GM12878 (cell line): ENCODE measurements at regions of chr17 and their contacts with region 1.

Region 1: DNA sequence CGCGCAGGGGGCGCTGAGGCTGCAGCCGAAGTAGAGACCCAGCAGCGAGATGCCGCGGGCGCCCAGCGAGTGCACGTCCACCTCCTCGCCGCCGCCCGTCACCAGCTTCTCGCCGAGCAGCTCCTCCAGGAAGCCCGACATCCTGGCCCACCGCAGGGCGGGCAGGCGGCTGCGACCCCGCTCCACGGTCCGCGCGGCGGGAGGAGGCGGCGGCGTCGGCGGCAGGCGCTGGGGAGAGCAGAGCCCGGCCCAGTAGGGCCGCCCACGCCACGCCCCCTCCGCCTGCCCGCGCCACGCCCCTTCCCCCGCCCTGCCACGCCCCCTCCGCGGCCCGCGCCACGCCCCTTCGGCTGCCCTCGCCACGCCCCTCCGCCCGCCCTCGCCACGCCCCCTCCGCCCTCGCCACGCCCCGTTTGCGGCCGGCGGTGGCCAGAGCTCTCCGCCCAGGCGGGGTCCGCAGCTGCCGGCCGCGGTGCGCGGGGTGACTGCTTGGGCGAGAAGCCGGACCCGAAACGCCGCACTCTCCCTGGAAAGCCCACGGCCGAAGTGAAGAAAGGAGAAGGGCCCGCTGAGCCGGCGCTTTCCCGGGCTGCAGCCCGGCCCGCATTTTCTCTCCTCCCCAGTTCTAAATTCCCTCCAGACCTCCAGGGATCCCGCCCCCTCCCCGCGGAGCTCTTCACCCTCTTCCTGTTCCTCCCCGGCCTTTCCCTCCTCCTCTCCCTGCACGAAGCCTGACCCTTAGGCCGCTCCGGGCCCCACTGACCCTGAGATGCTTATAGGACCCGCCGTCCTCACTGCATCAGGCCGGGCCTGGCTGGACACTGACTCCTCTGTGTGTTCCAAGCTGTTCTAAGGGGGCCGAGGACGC is at the start of gene NXN:
- DNase-seq: no peak
- ATAC-seq: peak; percentile 91
- H3K4me3 ChIP-seq: peak within 1 kb of the TSS; percentile 61
- H3K27ac ChIP-seq: no peak within 1 kb of the TSS
- H3K4me1 ChIP-seq: peaks cover 7% of the 10 kb centered on the region; the same call in 1 of the 2 replicates
- H3K27me3 ChIP-seq: peaks cover 3 to 11% of the 10 kb centered on the region in 2 experiments; a peak in 2 of 4 replicates
- CTCF ChIP-seq: no peak; a peak in 1 of 6 replicates
- EP300 ChIP-seq: no peak
- POLR2A ChIP-seq: no peak
- RAD21 ChIP-seq: no peak
- polyA plus RNA-seq, gene NXN: 0.04 to 0.10 TPM

Region 2: DNA sequence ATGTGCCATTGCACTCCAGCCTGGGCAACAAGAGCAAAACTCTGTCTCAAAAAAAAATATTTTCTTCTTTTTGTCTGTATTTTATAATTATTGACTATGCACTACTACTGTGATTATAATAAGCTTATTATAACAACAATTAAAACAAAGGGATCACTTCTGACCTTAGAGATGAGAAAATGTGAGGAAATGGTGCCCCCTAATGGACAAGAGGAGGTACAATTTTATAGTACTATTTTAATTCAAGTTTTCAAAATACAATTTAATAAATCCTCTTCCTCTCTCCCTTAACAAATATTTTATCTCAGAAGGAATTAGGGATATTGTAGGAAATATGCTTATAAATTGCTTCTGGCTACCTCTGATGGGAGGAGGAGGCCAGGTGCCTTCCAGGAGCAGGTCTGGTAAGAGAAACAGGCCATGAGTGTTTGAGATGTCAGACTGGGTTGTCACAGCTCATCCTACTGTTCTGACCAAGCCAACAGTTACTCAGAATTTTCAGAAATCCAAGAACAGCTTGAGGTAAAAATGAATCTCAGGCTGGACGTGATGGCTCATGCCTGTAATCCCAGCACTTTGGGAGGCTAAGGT is 279.2 kb before region 1 on chr17:
- CTCF ChIA-PET with region 1: interaction called, 13 read pairs
- POLR2A ChIA-PET with region 1: no interaction called
- RAD21 ChIA-PET with region 1: interaction called, 7 read pairs
- SMC1A ChIA-PET with region 1: interaction called, 9 read pairs
- in situ Hi-C with region 1: no loop called
- intact Hi-C with region 1: no loop called
- DNase-seq: no peak
- ATAC-seq: peak; percentile 52
- H3K4me3 ChIP-seq: no peak overlapping the region
- H3K27ac ChIP-seq: no peak overlapping the region
- H3K4me1 ChIP-seq: no peaks in the 10 kb centered on the region
- H3K27me3 ChIP-seq: no peaks in the 10 kb centered on the region
- CTCF ChIP-seq: peak; percentile 37 to 64 (median 43); a peak in 5 of 6 replicates
- EP300 ChIP-seq: no peak
- POLR2A ChIP-seq: no peak
- RAD21 ChIP-seq: peak; percentile 67

Region 3: DNA sequence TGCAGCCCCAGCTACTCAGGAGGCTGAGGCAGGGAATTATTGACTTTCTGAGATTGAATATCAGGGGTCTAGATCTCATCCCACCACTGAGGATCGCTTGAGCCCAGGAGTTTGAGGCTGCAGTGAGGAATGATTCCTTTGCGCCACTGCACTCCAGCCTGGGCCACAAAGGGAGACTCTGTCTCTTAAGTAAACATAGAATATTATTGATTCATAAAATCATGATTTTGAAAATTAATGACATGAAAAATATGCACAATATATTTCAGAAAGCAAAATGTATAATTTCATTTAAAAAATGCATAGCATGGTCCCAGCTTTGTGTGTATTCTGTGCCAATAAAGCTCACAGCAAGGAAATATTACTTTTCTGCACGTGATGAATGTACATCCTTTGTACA is 263.5 kb before region 1 on chr17:
- CTCF ChIA-PET with region 1: interaction called, 6 read pairs
- POLR2A ChIA-PET with region 1: no interaction called
- RAD21 ChIA-PET with region 1: interaction called, 8 read pairs
- SMC1A ChIA-PET with region 1: interaction called, 5 read pairs
- in situ Hi-C with region 1: no loop called
- intact Hi-C with region 1: loop called (anchors 10 kb)
- DNase-seq: no peak
- ATAC-seq: no peak
- H3K4me3 ChIP-seq: no peak overlapping the region
- H3K27ac ChIP-seq: no peak overlapping the region
- H3K4me1 ChIP-seq: no peaks in the 10 kb centered on the region; the same call in 1 of the 2 replicates
- H3K27me3 ChIP-seq: no peaks in the 10 kb centered on the region
- CTCF ChIP-seq: no peak
- EP300 ChIP-seq: no peak
- POLR2A ChIP-seq: no peak
- RAD21 ChIP-seq: no peak

Region 4: DNA sequence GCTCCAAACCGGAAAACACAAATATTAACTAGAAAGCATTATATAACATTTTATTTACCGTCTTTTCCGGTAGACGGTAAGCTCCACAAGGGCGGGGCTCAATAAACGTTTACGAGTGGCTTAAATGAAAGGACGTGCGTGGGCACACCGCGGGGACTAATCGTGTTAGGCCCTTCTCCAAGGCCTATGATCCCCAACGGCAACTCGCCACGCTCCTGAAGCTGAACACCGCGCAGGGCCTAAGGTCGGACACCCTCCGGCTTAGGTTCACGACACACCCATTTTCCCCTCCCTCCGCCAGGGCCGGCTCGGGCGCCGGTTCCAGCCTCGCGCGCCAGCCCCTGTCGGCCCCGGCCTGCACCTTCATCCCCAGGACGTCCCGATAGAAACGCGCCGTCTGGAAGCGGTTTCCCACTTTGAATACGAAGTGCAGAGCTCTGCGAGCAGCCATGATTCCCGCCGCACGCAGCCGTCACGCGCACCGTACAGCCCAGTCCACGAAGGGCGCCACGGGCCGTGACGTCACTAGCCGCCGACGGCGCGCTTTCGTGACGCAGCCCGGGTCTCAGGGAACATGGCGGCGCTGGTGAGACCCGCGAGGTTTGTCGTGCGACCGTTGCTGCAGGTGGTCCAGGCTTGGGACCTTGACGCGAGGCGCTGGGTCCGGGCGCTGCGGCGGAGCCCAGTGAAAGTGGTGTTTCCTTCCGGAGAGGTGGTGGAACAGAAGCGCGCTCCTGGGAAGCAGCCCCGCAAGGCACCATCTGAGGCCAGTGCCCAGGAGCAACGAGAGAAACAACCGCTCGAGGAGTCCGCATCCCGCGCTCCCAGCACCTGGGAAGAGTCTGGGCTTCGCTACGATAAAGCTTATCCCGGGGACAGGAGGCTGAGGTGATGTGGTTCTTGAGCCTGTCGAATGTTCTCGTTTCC is 197.7 kb before region 1 on chr17 and contains the starts of genes GLOD4 and MRM3:
- CTCF ChIA-PET with region 1: interaction called, 13 read pairs
- POLR2A ChIA-PET with region 1: interaction called, 3 read pairs
- RAD21 ChIA-PET with region 1: interaction called, 25 read pairs
- SMC1A ChIA-PET with region 1: interaction called, 13 read pairs
- in situ Hi-C with region 1: no loop called
- intact Hi-C with region 1: no loop called
- DNase-seq: peak; percentile 72
- ATAC-seq: peak; percentile 96
- H3K4me3 ChIP-seq: peak within 1 kb of the TSS; percentile 89
- H3K27ac ChIP-seq: peak within 1 kb of the TSS; percentile 72
- H3K4me1 ChIP-seq: peaks cover 10% of the 10 kb centered on the region
- H3K27me3 ChIP-seq: no peaks in the 10 kb centered on the region
- CTCF ChIP-seq: peak in 2 of 3 experiments; percentile 11 to 16; a peak in 1 of 6 replicates
- EP300 ChIP-seq: peak in 1 of 2 experiments; percentile 38; a peak in 1 of 4 replicates
- POLR2A ChIP-seq: peak; percentile 98
- RAD21 ChIP-seq: no peak
- polyA plus RNA-seq, gene GLOD4: 83.4 to 107 TPM
- polyA plus RNA-seq, gene MRM3: 2.3 to 6.0 TPM

Region 5: GRCh38 chr17:794876-795275 is 184.9 kb before region 1 on chr17:
- CTCF ChIA-PET with region 1: interaction called, 61 read pairs
- POLR2A ChIA-PET with region 1: interaction called, 3 read pairs
- RAD21 ChIA-PET with region 1: interaction called, 32 read pairs
- SMC1A ChIA-PET with region 1: interaction called, 24 read pairs
- in situ Hi-C with region 1: no loop called
- intact Hi-C with region 1: loop called (anchors 1 kb)
- DNase-seq: no peak
- ATAC-seq: peak; percentile 85
- H3K4me3 ChIP-seq: no peak overlapping the region
- H3K27ac ChIP-seq: no peak overlapping the region
- H3K4me1 ChIP-seq: no peaks in the 10 kb centered on the region
- H3K27me3 ChIP-seq: no peaks in the 10 kb centered on the region
- CTCF ChIP-seq: peak; percentile 61 to 71 (median 68)
- EP300 ChIP-seq: no peak
- POLR2A ChIP-seq: no peak
- RAD21 ChIP-seq: peak; percentile 81

Region 6: DNA sequence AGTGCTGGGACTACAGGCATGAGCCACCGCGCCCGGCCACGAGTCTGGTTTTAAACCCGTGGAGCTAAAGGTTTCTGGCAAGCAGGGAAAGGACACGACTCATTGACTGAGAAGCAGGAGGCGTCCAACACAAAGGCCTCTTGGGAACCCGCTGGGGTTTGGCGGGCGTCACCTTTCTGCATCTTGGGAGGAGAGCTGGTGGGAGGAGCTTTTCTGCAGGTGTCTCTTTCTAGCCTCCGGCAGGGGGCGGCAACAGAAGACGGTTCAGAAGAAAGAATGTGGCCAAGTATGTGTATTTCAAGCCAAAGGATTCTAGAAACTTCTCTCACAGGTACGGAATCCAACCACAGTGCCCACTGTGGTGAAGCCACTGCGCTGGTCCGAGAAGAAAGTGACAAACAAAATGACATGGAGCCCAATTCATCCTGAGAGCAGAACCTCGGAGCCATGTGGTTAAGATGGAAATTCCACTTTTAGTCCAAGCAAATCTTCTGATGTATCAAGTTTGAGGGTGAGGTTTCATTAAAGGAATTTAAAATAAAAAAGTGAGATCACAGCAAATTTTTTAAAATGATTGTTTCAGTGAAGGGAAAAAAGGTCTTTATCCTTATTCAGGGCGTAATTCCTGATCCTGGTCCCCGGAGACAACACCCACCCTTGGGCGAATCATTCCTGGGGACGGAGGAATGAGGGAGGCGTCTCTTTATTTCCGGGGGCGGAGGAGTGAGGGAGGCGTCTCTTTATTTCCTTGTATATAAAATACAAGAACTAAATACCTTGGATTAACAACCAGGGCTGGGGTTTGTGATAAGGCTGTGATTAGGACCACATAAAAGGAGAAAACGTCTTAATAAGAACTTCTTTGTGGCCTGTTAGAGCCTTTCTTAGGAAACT is 100.0 kb before region 1 on chr17:
- CTCF ChIA-PET with region 1: interaction called, 33 read pairs
- POLR2A ChIA-PET with region 1: no interaction called
- RAD21 ChIA-PET with region 1: interaction called, 22 read pairs
- SMC1A ChIA-PET with region 1: interaction called, 9 read pairs
- in situ Hi-C with region 1: no loop called
- intact Hi-C with region 1: loop called (anchors 1 kb)
- DNase-seq: peak; percentile 5
- ATAC-seq: peak; percentile 80
- H3K4me3 ChIP-seq: no peak overlapping the region
- H3K27ac ChIP-seq: no peak overlapping the region
- H3K4me1 ChIP-seq: no peaks in the 10 kb centered on the region
- H3K27me3 ChIP-seq: no peaks in the 10 kb centered on the region
- CTCF ChIP-seq: peak; percentile 43 to 59 (median 45); a peak in 5 of 6 replicates
- EP300 ChIP-seq: no peak
- POLR2A ChIP-seq: no peak
- RAD21 ChIP-seq: peak; percentile 36; the same call in 1 of the 2 replicates

Region 7: GRCh38 chr17:948284-948852 is 31.4 kb before region 1 on chr17:
- CTCF ChIA-PET with region 1: no interaction called
- POLR2A ChIA-PET with region 1: no interaction called
- RAD21 ChIA-PET with region 1: no interaction called
- SMC1A ChIA-PET with region 1: no interaction called
- in situ Hi-C with region 1: no loop called
- intact Hi-C with region 1: no loop called
- DNase-seq: no peak
- ATAC-seq: no peak
- H3K4me3 ChIP-seq: no peak overlapping the region
- H3K27ac ChIP-seq: no peak overlapping the region
- H3K4me1 ChIP-seq: no peaks in the 10 kb centered on the region
- H3K27me3 ChIP-seq: no peaks in the 10 kb centered on the region
- CTCF ChIP-seq: no peak
- EP300 ChIP-seq: no peak
- POLR2A ChIP-seq: no peak
- RAD21 ChIP-seq: no peak

Region 8: GRCh38 chr17:996554-997344 is 17.0 kb after region 1 on chr17 and contains the start of gene TIMM22:
- CTCF ChIA-PET with region 1: interaction called, 25 read pairs
- POLR2A ChIA-PET with region 1: interaction called, 3 read pairs
- RAD21 ChIA-PET with region 1: interaction called, 12 read pairs
- SMC1A ChIA-PET with region 1: interaction called, 8 read pairs
- in situ Hi-C with region 1: no loop called
- intact Hi-C with region 1: no loop called
- DNase-seq: peak; percentile 85
- ATAC-seq: peak; percentile 98
- H3K4me3 ChIP-seq: peak within 1 kb of the TSS; percentile 79
- H3K27ac ChIP-seq: peak within 1 kb of the TSS; percentile 81
- H3K4me1 ChIP-seq: peaks cover 6% of the 10 kb centered on the region; the same call in 1 of the 2 replicates
- H3K27me3 ChIP-seq: no peaks in the 10 kb centered on the region
- CTCF ChIP-seq: peak; percentile 89 to 91 (median 91)
- EP300 ChIP-seq: peak; percentile 13 to 100; a peak in 2 of 4 replicates
- POLR2A ChIP-seq: peak; percentile 94
- RAD21 ChIP-seq: peak; percentile 68
- polyA plus RNA-seq, gene TIMM22: 4.4 to 5.7 TPM

Region 9: DNA sequence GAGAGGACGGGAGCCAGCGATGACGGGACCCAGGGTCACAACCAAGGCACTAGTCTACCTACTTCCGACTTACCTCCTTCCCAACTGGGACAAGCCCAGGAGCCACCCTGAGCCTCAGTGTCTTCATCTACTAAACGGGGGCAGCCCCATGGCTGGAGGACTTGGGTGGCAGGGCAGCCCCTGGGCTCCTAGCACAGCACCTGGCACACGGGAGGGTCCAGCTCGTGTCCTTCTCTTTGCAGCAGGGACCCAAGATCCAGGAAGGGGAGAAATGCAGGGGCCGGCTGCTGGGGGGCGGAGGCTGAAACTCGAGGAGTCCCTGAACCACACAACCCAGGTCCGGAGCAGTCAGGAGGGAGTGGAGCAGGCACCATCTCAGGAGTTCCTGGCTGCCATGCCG is 136.8 kb after region 1 on chr17:
- CTCF ChIA-PET with region 1: no interaction called
- POLR2A ChIA-PET with region 1: no interaction called
- RAD21 ChIA-PET with region 1: no interaction called
- SMC1A ChIA-PET with region 1: no interaction called
- in situ Hi-C with region 1: no loop called
- intact Hi-C with region 1: no loop called
- DNase-seq: no peak
- ATAC-seq: no peak
- H3K4me3 ChIP-seq: no peak overlapping the region
- H3K27ac ChIP-seq: no peak overlapping the region
- H3K4me1 ChIP-seq: peaks cover 6% of the 10 kb centered on the region
- H3K27me3 ChIP-seq: no peaks in the 10 kb centered on the region
- CTCF ChIP-seq: no peak
- EP300 ChIP-seq: no peak
- POLR2A ChIP-seq: no peak
- RAD21 ChIP-seq: no peak